GM12878 (cell line): ENCODE measurements at regions of chr7 and their contacts with region 1.

Region 1: DNA sequence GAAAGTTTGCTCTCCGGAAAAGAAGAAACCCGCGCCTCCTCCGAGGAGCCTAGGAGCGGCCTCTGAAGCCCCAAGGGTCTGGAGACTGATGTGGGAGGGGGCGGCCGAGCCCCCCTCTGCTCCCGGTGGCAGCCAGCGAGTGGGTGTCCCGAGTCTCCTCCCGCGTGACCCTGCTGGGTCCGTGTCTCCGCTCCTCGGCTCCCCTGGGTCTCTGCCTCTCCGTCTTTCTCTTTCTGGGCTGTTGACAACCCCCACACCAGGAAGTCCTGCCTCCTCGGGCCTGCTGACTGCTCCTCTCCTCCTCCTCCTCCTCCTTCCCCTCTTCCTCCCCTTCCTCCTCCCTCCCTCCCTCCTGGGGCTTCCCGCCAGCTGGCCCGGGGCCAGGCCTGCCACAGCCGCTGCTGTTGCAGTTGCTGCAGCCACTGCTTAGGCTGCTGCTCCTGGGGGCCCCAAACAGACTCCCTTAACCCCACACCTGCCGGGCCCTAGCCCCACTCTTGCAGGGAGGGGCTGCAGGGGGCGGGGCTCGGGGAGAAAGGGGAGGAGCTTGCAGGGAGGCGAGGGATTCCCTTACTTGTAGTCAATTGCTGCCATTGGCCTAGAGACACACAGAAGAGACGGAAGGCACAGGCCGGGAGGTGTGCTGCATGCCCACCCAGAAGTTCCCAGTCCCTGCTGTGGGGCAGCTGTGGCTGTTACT is at the start of gene TSC22D4:
- DNase-seq: peak; percentile 79
- ATAC-seq: peak; percentile 85
- H3K4me3 ChIP-seq: peak within 1 kb of the TSS; percentile 99
- H3K27ac ChIP-seq: peak within 1 kb of the TSS; percentile 89
- H3K4me1 ChIP-seq: peaks cover 27% of the 10 kb centered on the region
- H3K27me3 ChIP-seq: no peaks in the 10 kb centered on the region
- CTCF ChIP-seq: no peak
- EP300 ChIP-seq: no peak
- POLR2A ChIP-seq: peak; percentile 87
- RAD21 ChIP-seq: no peak
- polyA plus RNA-seq, gene TSC22D4: 0.50 to 1.2 TPM

Region 2: DNA sequence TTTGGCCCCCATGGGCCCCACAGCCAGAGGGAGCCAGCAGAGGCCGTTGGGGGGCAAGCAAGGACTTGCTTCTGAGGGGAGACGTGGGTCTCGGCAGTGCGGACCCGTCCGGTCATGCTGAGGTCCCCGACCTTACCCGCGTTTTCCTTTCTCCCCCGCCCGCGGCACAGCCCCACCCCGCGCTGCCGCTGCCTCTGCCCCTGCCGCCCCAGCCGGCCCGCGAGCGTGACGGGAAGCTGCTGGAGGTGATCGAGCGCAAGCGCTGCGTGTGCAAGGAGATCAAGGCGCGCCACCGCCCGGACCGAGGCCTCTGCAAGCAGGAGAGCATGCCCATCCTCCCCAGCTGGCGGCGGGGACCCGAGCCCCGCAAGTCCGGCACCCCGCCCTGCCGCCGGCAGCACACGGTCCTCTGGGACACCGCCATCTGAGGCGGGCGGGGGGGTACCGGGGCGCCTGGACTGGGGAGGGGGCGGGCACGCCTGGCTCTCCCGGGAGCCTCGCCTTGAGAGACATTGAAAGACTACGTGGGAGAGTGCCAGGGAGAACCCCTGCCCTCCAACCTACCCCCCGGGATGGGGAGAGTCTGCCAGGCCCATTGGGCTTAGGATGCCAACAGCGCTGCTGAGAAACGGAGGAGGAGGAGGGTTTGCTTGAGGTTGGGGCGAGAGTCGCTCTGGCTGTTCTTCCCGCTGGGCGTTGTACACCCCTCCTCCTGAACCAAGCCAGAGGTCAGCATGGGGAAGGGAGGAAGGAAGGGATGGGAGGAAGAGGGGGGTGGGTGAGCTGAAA is 14.6 kb after region 1 on chr7:
- CTCF ChIA-PET with region 1: interaction called, 11 read pairs
- POLR2A ChIA-PET with region 1: no interaction called
- RAD21 ChIA-PET with region 1: interaction called, 3 read pairs
- SMC1A ChIA-PET with region 1: no interaction called
- in situ Hi-C with region 1: no loop called
- intact Hi-C with region 1: no loop called
- DNase-seq: no peak
- ATAC-seq: peak; percentile 82
- H3K4me3 ChIP-seq: peak overlapping the region; percentile 53
- H3K27ac ChIP-seq: no peak overlapping the region
- H3K4me1 ChIP-seq: 0 out of 2 replicates have a peak, but pooled peaks cover 4% of the 10 kb centered on the region
- H3K27me3 ChIP-seq: no peaks in the 10 kb centered on the region
- CTCF ChIP-seq: peak in 2 of 3 experiments; percentile 16 to 37; a peak in 3 of 6 replicates
- EP300 ChIP-seq: no peak
- POLR2A ChIP-seq: peak; percentile 27; the same call in 1 of the 2 replicates
- RAD21 ChIP-seq: peak; percentile 43; the same call in 1 of the 2 replicates

Region 3: DNA sequence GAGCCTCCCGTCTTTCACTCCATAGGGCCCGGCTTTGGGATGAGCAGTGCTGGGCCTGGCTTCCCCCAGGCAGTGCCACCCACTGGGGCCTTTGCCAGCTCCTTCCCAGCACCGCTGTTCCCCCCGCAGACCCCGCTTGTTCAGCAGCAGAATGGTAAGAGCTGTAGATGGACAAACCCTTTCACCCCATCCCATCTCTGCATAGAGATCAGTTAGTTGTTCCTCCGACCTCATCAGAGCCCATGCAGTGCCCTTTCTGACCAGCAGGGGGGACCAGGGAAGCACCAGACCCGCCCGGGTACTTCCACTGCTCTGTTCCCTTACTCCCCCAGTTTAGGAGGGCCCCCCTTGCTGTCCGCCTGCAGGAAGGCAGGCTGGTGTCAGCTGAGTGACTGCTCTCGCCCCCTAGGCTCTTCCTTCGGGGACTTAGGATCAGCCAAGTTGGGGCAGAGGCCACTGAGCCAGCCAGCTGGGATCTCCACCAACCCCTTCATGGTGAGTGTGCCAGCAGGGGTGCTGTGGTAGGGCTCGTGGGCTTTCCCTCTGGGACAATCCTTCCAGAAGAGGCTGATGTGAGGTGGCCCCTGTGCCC is 84.8 kb after region 1 on chr7:
- CTCF ChIA-PET with region 1: interaction called, 49 read pairs
- POLR2A ChIA-PET with region 1: interaction called, 12 read pairs
- RAD21 ChIA-PET with region 1: interaction called, 13 read pairs
- SMC1A ChIA-PET with region 1: interaction called, 12 read pairs
- in situ Hi-C with region 1: loop called (anchors 5 kb)
- intact Hi-C with region 1: no loop called
- DNase-seq: no peak
- ATAC-seq: peak; percentile 84
- H3K4me3 ChIP-seq: no peak overlapping the region
- H3K27ac ChIP-seq: no peak overlapping the region
- H3K4me1 ChIP-seq: peaks cover 8% of the 10 kb centered on the region
- H3K27me3 ChIP-seq: no peaks in the 10 kb centered on the region
- CTCF ChIP-seq: peak; percentile 94 to 98 (median 97)
- EP300 ChIP-seq: no peak
- POLR2A ChIP-seq: peak; percentile 35
- RAD21 ChIP-seq: peak; percentile 71

Region 4: DNA sequence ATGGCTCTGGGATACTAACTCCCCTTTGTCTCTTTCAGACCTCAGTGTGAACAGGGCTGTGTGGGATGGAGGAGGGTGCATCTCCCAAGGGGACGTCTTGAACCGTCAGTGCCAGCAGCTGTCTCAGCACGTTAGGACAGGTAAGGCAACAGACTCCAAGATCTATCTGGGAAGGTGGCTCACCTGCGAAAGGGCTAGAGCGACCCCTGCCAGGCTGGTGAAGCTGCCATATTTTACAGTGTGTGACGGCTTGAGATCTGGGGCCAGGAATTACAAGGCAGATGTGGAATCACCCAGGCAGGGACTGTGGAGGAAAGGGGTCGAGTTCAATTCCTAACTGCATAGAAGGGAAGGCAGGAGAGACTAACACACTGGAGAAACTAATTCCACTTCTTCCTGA is 552.0 kb after region 1 on chr7:
- CTCF ChIA-PET with region 1: no interaction called
- POLR2A ChIA-PET with region 1: no interaction called
- RAD21 ChIA-PET with region 1: no interaction called
- SMC1A ChIA-PET with region 1: no interaction called
- in situ Hi-C with region 1: no loop called
- intact Hi-C with region 1: no loop called
- DNase-seq: no peak
- ATAC-seq: no peak
- H3K4me3 ChIP-seq: no peak overlapping the region
- H3K27ac ChIP-seq: no peak overlapping the region
- H3K4me1 ChIP-seq: no peaks in the 10 kb centered on the region
- H3K27me3 ChIP-seq: no peaks in the 10 kb centered on the region
- CTCF ChIP-seq: peak in 2 of 3 experiments; percentile 18 to 39; a peak in 3 of 6 replicates
- EP300 ChIP-seq: no peak
- POLR2A ChIP-seq: no peak
- RAD21 ChIP-seq: peak; percentile 48